Aorta (tissue), 5 donors: ENCODE measurements at regions of chr15 and their contacts with region 1.

Region 1: DNA sequence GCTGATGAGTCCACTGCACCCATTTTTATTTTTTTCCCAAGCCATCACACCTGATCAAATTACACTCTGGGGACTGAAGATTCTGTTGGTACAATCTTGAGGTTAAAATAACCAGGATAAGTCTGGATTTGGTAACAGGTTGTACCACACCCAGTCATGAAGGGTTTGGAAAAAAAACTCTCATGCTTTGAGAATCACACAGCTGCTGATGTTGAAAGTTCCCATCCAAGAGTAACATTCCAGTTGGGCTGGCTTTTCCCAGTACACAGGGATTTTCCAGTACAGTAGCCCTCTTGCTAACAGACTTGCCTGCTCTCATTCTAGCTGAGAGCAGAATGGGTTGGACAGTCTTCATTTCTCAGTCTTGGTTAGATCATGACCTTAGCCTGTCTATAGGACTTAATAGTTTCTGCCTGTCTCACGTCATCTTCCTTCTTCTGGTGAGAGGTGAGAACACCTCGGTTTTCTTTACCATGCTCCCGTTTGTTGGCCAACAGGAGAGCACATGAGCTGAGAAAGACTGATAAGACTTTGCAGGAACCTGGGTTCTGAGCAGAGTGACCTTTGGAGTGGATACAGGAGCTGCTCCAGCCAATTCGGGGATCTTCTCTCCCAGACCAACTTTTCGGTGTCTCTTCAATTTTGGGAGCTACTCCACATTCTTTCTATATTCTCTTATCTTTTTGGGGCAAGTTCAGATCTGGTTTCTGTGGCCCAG is 300.1 kb upstream of the LYSMD4 start:
- DNase-seq: no peak
- ATAC-seq: peak; percentile 62
- H3K4me3 ChIP-seq: no peak overlapping the region
- H3K27ac ChIP-seq: peak overlapping the region; percentile 9 to 76
- H3K4me1 ChIP-seq: peaks cover 0 to 5% of the 10 kb centered on the region in 2 donors
- H3K27me3 ChIP-seq: no peaks in the 10 kb centered on the region

Region 2: GRCh38 chr15:99909592-99910295 is 123.6 kb before region 1 on chr15:
- intact Hi-C with region 1: no loop called
- DNase-seq: no peak
- ATAC-seq: no peak
- H3K4me3 ChIP-seq: no peak overlapping the region
- H3K27ac ChIP-seq: no peak overlapping the region
- H3K4me1 ChIP-seq: no peaks in the 10 kb centered on the region
- H3K27me3 ChIP-seq: no peaks in the 10 kb centered on the region

Region 3: GRCh38 chr15:99932676-99933402 is 100.5 kb before region 1 on chr15:
- intact Hi-C with region 1: no loop called
- DNase-seq: no peak
- ATAC-seq: no peak
- H3K4me3 ChIP-seq: no peak overlapping the region
- H3K27ac ChIP-seq: no peak overlapping the region
- H3K4me1 ChIP-seq: no peaks in the 10 kb centered on the region
- H3K27me3 ChIP-seq: no peaks in the 10 kb centered on the region

Region 4: GRCh38 chr15:100111103-100112060 is 78.1 kb after region 1 on chr15:
- intact Hi-C with region 1: loop called (anchors 1 to 5 kb)
- DNase-seq: peak; percentile 87 to 90
- ATAC-seq: peak; percentile 87
- H3K4me3 ChIP-seq: no peak overlapping the region
- H3K27ac ChIP-seq: peak overlapping the region; percentile 95 to 99
- H3K4me1 ChIP-seq: peaks cover 0 to 4% of the 10 kb centered on the region in 2 donors
- H3K27me3 ChIP-seq: no peaks in the 10 kb centered on the region